Mammary epithelial cell (primary cell): ENCODE measurements at regions of chr4 and their contacts with region 1.

Region 1: GRCh38 chr4:39527273-39528060 is at the start of gene UGDH:
- DNase-seq: peak; percentile 98
- H3K4me3 ChIP-seq: peak within 1 kb of the TSS; percentile 68 to 89 (median 87)
- H3K27ac ChIP-seq: peak within 1 kb of the TSS; percentile 85
- H3K4me1 ChIP-seq: peaks cover 8% of the 10 kb centered on the region
- H3K27me3 ChIP-seq: no peaks in the 10 kb centered on the region
- CTCF ChIP-seq: no peak
- total RNA-seq, gene UGDH: 46.8 to 69.0 TPM

Region 2: GRCh38 chr4:39559626-39560025 is 32.2 kb after region 1 on chr4:
- CTCF ChIA-PET with region 1: no interaction called
- dilution Hi-C with region 1: no loop called
- in situ Hi-C with region 1: no loop called
- intact Hi-C with region 1: no loop called
- DNase-seq: no peak
- H3K4me3 ChIP-seq: no peak overlapping the region
- H3K27ac ChIP-seq: no peak overlapping the region
- H3K4me1 ChIP-seq: no peaks in the 10 kb centered on the region
- H3K27me3 ChIP-seq: no peaks in the 10 kb centered on the region
- CTCF ChIP-seq: no peak

Region 3: GRCh38 chr4:39597695-39598381 is 70.4 kb after region 1 on chr4:
- CTCF ChIA-PET with region 1: no interaction called
- dilution Hi-C with region 1: no loop called
- in situ Hi-C with region 1: no loop called
- intact Hi-C with region 1: loop called (anchors 5 kb)
- DNase-seq: no peak
- H3K4me3 ChIP-seq: no peak overlapping the region
- H3K27ac ChIP-seq: no peak overlapping the region
- H3K4me1 ChIP-seq: no peaks in the 10 kb centered on the region
- H3K27me3 ChIP-seq: no peaks in the 10 kb centered on the region
- CTCF ChIP-seq: no peak

Region 4: GRCh38 chr4:39638354-39639240 is 111.1 kb after region 1 on chr4 and contains the start of gene SMIM14:
- CTCF ChIA-PET with region 1: no interaction called
- dilution Hi-C with region 1: no loop called
- in situ Hi-C with region 1: loop called in 1 of 2 experiments (anchors 5 kb)
- intact Hi-C with region 1: loop called (anchors 1 kb)
- DNase-seq: peak; percentile 98
- H3K4me3 ChIP-seq: peak within 1 kb of the TSS; percentile 66 to 93 (median 76)
- H3K27ac ChIP-seq: peak within 1 kb of the TSS; percentile 98
- H3K4me1 ChIP-seq: peaks cover 23% of the 10 kb centered on the region
- H3K27me3 ChIP-seq: no peaks in the 10 kb centered on the region
- CTCF ChIP-seq: peak in 1 of 2 donors; percentile 14
- total RNA-seq, gene SMIM14: 15.7 to 26.8 TPM

Region 5: DNA sequence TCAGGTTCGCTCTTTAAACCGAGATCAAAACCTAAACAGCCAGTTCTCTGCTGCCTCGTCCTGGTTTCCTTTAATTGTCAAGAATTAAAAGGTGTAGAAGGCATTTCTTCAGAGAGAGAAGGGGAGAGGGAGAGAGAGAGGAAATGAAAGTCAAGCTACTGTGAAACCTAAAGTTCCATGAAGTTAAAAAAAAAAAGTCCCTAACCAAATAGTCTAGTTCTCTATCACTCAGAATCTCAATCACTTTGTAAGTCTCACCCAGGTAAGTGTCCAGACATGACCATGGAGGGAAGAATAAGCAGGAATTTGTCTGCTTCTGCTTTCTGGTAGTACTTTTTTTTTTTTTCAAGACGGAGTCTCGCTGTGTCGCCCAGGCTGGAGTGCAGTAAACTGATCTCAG is 130.0 kb after region 1 on chr4:
- CTCF ChIA-PET with region 1: no interaction called
- dilution Hi-C with region 1: no loop called
- in situ Hi-C with region 1: no loop called
- intact Hi-C with region 1: loop called (anchors 1 kb)
- DNase-seq: peak; percentile 8
- H3K4me3 ChIP-seq: no peak overlapping the region
- H3K27ac ChIP-seq: no peak overlapping the region
- H3K4me1 ChIP-seq: no peaks in the 10 kb centered on the region
- H3K27me3 ChIP-seq: no peaks in the 10 kb centered on the region
- CTCF ChIP-seq: no peak

Region 6: GRCh38 chr4:39697740-39698423 is 170.4 kb after region 1 on chr4 and contains the start of gene UBE2K:
- CTCF ChIA-PET with region 1: no interaction called
- dilution Hi-C with region 1: no loop called
- in situ Hi-C with region 1: no loop called
- intact Hi-C with region 1: loop called (anchors 5 kb)
- DNase-seq: peak; percentile 88
- H3K4me3 ChIP-seq: peak within 1 kb of the TSS; percentile 84 to 97 (median 86)
- H3K27ac ChIP-seq: peak within 1 kb of the TSS; percentile 79
- H3K4me1 ChIP-seq: peaks cover 8% of the 10 kb centered on the region
- H3K27me3 ChIP-seq: no peaks in the 10 kb centered on the region
- CTCF ChIP-seq: no peak
- total RNA-seq, gene UBE2K: 23.3 to 105 TPM

Region 7: GRCh38 chr4:39977489-39978377 is 450.3 kb after region 1 on chr4 and contains the start of gene PDS5A:
- CTCF ChIA-PET with region 1: no interaction called
- dilution Hi-C with region 1: no loop called
- in situ Hi-C with region 1: no loop called
- intact Hi-C with region 1: loop called (anchors 2 kb)
- DNase-seq: peak; percentile 94
- H3K4me3 ChIP-seq: peak within 1 kb of the TSS; percentile 85 to 96 (median 87)
- H3K27ac ChIP-seq: peak within 1 kb of the TSS; percentile 80
- H3K4me1 ChIP-seq: peaks cover 10% of the 10 kb centered on the region
- H3K27me3 ChIP-seq: no peaks in the 10 kb centered on the region
- CTCF ChIP-seq: peak; percentile 73 to 83
- total RNA-seq, gene PDS5A: 72.2 to 78.5 TPM